Ascending aorta (tissue), 2 donors: ENCODE measurements at regions of chr20 and their contacts with region 1.

Region 1: DNA sequence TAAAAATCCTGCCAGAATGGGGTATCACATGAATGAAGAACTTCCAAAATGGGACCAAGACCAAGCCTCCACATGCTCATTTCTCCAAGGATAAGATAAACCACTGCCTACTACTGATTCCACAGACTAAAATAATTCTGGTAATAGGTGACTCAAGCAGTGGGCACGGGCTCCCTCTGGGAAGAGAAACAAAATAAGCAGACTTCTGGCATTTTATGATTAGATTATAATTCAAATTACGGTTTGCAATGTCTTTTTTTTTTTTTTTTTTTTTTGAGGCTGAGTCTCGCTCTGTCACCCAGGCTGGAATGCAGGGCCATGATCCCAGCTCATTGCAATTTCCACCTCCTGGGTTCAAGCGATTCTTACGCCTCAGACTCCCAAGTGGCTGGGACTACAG is 16.0 kb downstream of the UQCC1 start:
- DNase-seq: peak; percentile 12 to 76
- H3K4me3 ChIP-seq: no peak overlapping the region
- H3K27ac ChIP-seq: peak overlapping the region; percentile 77 to 79
- H3K4me1 ChIP-seq: peaks cover 7 to 12% of the 10 kb centered on the region in 2 donors
- H3K27me3 ChIP-seq: no peaks in the 10 kb centered on the region
- CTCF ChIP-seq: peak in 1 of 3 experiments; percentile 32

Region 2: DNA sequence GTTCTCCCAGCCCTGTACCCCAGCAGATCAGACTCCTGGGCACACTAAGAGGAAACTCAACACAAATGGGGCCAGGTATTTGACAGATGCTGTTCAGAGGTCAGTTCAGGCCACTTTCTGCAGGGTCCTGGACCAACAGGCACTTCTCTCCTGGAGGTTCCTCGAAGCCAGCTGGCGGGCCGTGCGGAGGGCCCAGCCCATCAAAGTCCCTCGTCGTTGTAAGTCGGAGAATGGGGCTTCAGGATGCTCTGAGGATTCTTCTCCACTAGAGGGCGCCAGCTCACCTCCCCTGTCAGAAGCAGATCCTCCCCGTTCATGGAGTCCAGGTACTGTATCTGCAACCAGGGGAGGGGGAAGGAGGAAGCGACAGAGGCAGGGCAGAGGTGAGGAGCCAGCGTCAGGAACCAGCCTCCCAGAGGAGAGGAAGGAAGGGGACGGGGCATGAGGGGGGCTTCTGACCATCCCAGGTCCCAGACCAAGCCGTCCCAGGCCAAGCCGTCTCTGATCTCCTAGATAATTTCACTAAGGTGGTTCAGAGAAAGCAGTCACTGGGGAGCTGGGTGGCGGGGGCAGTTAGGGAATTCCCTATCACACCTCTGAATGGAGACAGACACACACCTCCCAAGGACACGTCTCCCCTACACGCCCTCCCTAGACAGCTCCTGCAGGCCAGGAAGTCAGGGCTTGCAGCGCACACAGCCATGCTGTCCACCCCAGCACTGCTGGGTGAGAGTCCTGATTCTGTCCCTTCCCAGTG is 91.8 kb before region 1 on chr20:
- intact Hi-C with region 1: loop called (anchors 2 kb)
- DNase-seq: peak in 1 of 2 donors; percentile 89
- H3K4me3 ChIP-seq: no peak overlapping the region
- H3K27ac ChIP-seq: no peak overlapping the region
- H3K4me1 ChIP-seq: peaks cover 19 to 29% of the 10 kb centered on the region in 2 donors
- H3K27me3 ChIP-seq: no peaks in the 10 kb centered on the region
- CTCF ChIP-seq: peak; percentile 77 to 95 (median 94)

Region 3: GRCh38 chr20:35363190-35363589 is 32.5 kb before region 1 on chr20:
- intact Hi-C with region 1: no loop called
- DNase-seq: no peak
- H3K4me3 ChIP-seq: no peak overlapping the region
- H3K27ac ChIP-seq: no peak overlapping the region
- H3K4me1 ChIP-seq: no peaks in the 10 kb centered on the region
- H3K27me3 ChIP-seq: no peaks in the 10 kb centered on the region
- CTCF ChIP-seq: no peak

Region 4: DNA sequence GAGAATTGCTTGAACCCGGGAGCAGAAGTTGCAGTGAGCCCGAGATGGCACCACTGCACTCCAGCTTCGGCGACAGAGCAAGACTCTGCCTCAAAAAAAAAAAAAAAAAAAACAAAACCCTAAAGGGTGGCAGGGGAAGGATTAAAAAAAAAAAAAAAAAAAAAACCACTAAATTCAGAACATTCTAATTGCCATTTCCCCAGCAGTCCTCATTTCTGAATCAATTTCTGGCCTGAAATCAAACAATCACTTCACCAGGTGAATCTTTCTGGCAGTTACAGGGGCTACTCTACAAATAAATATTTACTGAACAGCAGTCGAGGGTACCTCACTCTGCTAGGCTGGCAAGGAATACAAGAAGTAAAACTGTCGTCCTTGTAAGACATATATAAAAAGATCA is 14.9 kb after region 1 on chr20:
- intact Hi-C with region 1: no loop called
- DNase-seq: no peak
- H3K4me3 ChIP-seq: peak overlapping the region; percentile 69 to 99
- H3K27ac ChIP-seq: no peak overlapping the region
- H3K4me1 ChIP-seq: peaks cover 0 to 7% of the 10 kb centered on the region in 2 donors
- H3K27me3 ChIP-seq: no peaks in the 10 kb centered on the region
- CTCF ChIP-seq: no peak

Region 5: DNA sequence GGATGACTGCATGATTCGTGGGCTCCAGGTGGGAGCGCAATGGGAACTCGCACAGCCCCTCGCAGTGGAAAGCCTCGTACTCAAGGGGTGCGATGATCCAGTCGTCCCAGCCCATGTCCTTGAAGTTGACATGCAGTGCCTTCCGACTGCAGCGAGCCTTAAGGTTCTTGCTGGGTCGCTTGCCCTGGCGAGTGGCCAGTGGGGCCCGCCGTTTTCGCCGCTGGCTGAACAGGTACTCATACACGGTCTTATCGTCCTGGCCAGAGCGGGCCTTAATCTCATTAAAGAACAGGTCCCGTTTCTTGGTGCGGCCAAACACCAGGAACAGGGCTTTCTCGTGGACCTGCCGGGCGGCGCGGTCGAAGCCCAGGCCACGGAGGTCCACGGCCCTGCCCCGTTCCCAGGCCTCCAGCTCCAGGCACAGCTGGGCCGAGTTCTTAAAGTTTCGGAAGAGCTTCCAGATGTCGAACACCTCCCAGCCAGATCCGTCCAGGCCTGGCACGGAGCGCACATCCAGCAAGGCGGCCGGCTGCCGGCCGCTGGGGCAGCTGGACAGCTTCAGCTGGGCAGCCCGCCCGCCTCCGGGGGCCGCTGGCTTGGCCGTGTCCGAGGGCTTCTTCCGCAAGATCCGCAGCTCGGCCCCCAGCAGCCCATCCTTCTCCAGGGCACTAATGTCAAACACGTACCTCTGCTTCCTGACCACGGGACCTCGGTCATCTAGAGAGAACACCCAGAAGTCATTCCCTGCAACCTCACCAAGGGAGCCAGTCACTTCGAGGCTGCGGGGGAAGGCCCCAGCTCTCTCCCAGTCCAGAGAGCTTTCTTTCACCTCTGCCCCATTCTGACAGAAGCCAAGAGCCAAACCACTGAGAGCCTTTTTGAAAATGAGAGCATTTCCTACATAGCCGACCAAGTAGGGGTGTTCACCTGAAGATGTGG is 38.6 kb after region 1 on chr20:
- intact Hi-C with region 1: loop called (anchors 5 kb)
- DNase-seq: no peak
- H3K4me3 ChIP-seq: no peak overlapping the region
- H3K27ac ChIP-seq: no peak overlapping the region
- H3K4me1 ChIP-seq: peaks cover 6 to 15% of the 10 kb centered on the region in 2 donors
- H3K27me3 ChIP-seq: no peaks in the 10 kb centered on the region
- CTCF ChIP-seq: no peak